CD8-positive, alpha-beta memory T cell (primary cell): ENCODE measurements at regions of chr9 and their contacts with region 1.

Region 1: GRCh38 chr9:83937911-83938323 is 16.7 kb upstream of the KIF27 start:
- DNase-seq: peak in 2 of 5 donors; percentile 54 to 56
- H3K4me3 ChIP-seq: no peak overlapping the region
- H3K4me3 Mint-ChIP-seq: no peak overlapping the region
- H3K27ac ChIP-seq: no peak overlapping the region
- H3K27ac Mint-ChIP-seq: no peak overlapping the region
- H3K4me1 ChIP-seq: no peaks in the 10 kb centered on the region
- H3K4me1 Mint-ChIP-seq: peaks cover 0 to 2% (median 0%) of the 10 kb centered on the region in 3 donors
- H3K27me3 ChIP-seq: no peaks in the 10 kb centered on the region
- H3K27me3 Mint-ChIP-seq: no peaks in the 10 kb centered on the region

Region 2: GRCh38 chr9:83733739-83734138 is 204.2 kb before region 1 on chr9:
- CTCF ChIA-PET with region 1: no interaction called
- POLR2A ChIA-PET with region 1: no interaction called
- DNase-seq: no peak
- H3K4me3 ChIP-seq: no peak overlapping the region
- H3K4me3 Mint-ChIP-seq: no peak overlapping the region
- H3K27ac ChIP-seq: no peak overlapping the region
- H3K27ac Mint-ChIP-seq: no peak overlapping the region
- H3K4me1 ChIP-seq: no peaks in the 10 kb centered on the region
- H3K4me1 Mint-ChIP-seq: no peaks in the 10 kb centered on the region
- H3K27me3 ChIP-seq: no peaks in the 10 kb centered on the region
- H3K27me3 Mint-ChIP-seq: peaks cover 0 to 3% of the 10 kb centered on the region in 2 donors

Region 3: DNA sequence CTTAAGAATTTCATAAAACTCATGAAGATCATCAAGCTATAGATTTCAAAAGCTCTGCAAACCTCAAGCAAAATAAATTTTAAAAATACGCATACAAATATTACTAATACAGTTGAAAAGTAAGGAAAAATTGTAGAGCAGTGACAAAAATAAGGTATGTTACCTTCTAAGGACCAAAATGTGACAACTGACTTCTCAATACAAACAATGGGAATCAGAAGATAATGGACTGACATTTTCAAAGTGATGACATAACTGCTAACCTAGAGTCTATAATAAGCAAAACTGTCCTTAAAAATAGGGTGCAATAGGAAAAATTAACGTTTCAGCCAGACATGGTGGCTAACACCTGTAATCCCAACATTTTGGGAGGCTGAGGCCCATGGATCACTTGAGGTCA is 69.7 kb after region 1 on chr9:
- CTCF ChIA-PET with region 1: no interaction called
- POLR2A ChIA-PET with region 1: no interaction called
- DNase-seq: no peak
- H3K4me3 ChIP-seq: no peak overlapping the region
- H3K4me3 Mint-ChIP-seq: no peak overlapping the region
- H3K27ac ChIP-seq: no peak overlapping the region
- H3K27ac Mint-ChIP-seq: no peak overlapping the region
- H3K4me1 ChIP-seq: no peaks in the 10 kb centered on the region
- H3K4me1 Mint-ChIP-seq: no peaks in the 10 kb centered on the region
- H3K27me3 ChIP-seq: no peaks in the 10 kb centered on the region
- H3K27me3 Mint-ChIP-seq: no peaks in the 10 kb centered on the region

Region 4: DNA sequence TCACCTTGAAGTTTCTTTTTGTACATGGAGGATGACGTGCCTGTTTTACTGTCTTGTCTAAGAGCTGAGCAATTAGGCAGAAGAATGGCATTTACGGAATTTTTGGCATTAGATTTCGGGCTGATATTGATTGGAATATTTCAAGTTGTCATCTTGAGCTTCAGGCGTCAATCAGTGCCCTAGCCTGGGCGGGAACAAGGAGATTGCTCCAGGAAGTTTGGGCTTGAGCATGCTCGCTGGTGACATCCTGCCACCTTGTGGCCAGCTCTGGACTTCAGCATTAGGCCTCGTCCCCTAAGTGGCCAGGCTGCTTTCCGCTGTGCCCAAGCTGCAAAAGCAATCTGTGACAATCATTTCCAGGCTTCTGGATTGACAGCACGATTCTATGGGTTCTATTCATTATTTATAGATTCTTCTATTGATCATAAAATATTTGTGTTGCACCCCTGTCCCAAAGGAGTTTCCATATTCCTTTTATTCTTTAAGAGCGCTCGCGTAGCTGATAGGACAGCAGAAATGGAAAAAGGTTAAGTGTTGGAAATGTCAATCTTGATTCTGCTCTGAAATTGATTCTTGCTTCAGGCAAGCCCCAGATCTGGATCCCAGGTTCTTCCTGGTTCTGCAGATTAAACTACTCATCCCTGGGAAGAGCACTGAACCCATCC is 323.3 kb after region 1 on chr9:
- CTCF ChIA-PET with region 1: interaction called, 16 read pairs
- POLR2A ChIA-PET with region 1: no interaction called
- DNase-seq: peak; percentile 10 to 55 (median 21)
- H3K4me3 ChIP-seq: no peak overlapping the region
- H3K4me3 Mint-ChIP-seq: peak overlapping the region in 1 of 7 donors; percentile 22
- H3K27ac ChIP-seq: no peak overlapping the region
- H3K27ac Mint-ChIP-seq: no peak overlapping the region
- H3K4me1 ChIP-seq: no peaks in the 10 kb centered on the region
- H3K4me1 Mint-ChIP-seq: peaks cover 3 to 9% (median 8%) of the 10 kb centered on the region in 3 donors
- H3K27me3 ChIP-seq: no peaks in the 10 kb centered on the region
- H3K27me3 Mint-ChIP-seq: peaks cover 5 to 22% of the 10 kb centered on the region in 2 donors